Natural killer cell (primary cell): ENCODE measurements at regions of chr12 and their contacts with region 1.

Region 1: GRCh38 chr12:121060149-121061001 is 21.3 kb upstream of the OASL start:
- DNase-seq: peak; percentile 53 to 86
- ATAC-seq: peak; percentile 92 to 96 (median 93)
- H3K4me3 ChIP-seq: peak overlapping the region; percentile 58
- H3K4me3 Mint-ChIP-seq: peak overlapping the region; percentile 92
- H3K27ac ChIP-seq: peak overlapping the region; percentile 98
- H3K27ac Mint-ChIP-seq: peak overlapping the region; percentile 95 to 97
- H3K4me1 ChIP-seq: peaks cover 16% of the 10 kb centered on the region
- H3K4me1 Mint-ChIP-seq: peaks cover 10% of the 10 kb centered on the region in 2 donors
- H3K27me3 ChIP-seq: no peaks in the 10 kb centered on the region
- H3K27me3 Mint-ChIP-seq: no peaks in the 10 kb centered on the region
- CTCF ChIP-seq: peak; percentile 43

Region 2: GRCh38 chr12:120554678-120555077 is 505.7 kb before region 1 on chr12:
- intact Hi-C with region 1: no loop called
- DNase-seq: no peak
- ATAC-seq: no peak
- H3K4me3 ChIP-seq: no peak overlapping the region
- H3K4me3 Mint-ChIP-seq: no peak overlapping the region
- H3K27ac ChIP-seq: no peak overlapping the region
- H3K27ac Mint-ChIP-seq: no peak overlapping the region
- H3K4me1 ChIP-seq: peaks cover 3% of the 10 kb centered on the region
- H3K4me1 Mint-ChIP-seq: peaks cover 0 to 6% of the 10 kb centered on the region in 2 donors
- H3K27me3 ChIP-seq: no peaks in the 10 kb centered on the region
- H3K27me3 Mint-ChIP-seq: no peaks in the 10 kb centered on the region
- CTCF ChIP-seq: no peak

Region 3: DNA sequence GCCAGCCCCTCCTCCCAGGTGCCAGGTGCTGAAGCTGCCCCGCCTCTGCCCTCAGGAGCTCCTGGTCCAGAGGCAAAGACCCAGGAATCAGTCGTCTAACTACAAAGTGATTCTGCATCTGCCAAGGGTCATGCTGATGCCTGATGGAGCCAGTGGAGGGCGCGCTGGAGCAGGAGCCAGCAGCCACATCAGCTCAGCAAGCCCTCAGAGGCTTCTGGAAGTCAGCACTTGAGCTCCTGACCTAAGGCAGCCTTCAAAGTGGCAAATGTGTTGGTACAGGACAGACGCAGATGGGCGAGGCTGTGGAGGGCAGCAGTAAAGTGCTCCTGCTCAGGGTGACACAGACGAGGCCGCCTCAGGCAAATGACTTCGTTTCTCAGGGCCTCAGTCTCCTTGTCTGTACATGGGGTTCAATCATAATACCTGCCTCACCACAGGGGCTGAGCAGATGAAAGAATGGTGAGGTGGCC is 55.0 kb before region 1 on chr12:
- intact Hi-C with region 1: loop called (anchors 1 kb)
- DNase-seq: peak; percentile 45 to 65
- ATAC-seq: peak; percentile 65 to 87 (median 74)
- H3K4me3 ChIP-seq: no peak overlapping the region
- H3K4me3 Mint-ChIP-seq: no peak overlapping the region
- H3K27ac ChIP-seq: no peak overlapping the region
- H3K27ac Mint-ChIP-seq: peak overlapping the region in 1 of 2 donors; percentile 63
- H3K4me1 ChIP-seq: peaks cover 5% of the 10 kb centered on the region
- H3K4me1 Mint-ChIP-seq: peaks cover 0 to 11% of the 10 kb centered on the region in 2 donors
- H3K27me3 ChIP-seq: no peaks in the 10 kb centered on the region
- H3K27me3 Mint-ChIP-seq: no peaks in the 10 kb centered on the region
- CTCF ChIP-seq: peak; percentile 48

Region 4: DNA sequence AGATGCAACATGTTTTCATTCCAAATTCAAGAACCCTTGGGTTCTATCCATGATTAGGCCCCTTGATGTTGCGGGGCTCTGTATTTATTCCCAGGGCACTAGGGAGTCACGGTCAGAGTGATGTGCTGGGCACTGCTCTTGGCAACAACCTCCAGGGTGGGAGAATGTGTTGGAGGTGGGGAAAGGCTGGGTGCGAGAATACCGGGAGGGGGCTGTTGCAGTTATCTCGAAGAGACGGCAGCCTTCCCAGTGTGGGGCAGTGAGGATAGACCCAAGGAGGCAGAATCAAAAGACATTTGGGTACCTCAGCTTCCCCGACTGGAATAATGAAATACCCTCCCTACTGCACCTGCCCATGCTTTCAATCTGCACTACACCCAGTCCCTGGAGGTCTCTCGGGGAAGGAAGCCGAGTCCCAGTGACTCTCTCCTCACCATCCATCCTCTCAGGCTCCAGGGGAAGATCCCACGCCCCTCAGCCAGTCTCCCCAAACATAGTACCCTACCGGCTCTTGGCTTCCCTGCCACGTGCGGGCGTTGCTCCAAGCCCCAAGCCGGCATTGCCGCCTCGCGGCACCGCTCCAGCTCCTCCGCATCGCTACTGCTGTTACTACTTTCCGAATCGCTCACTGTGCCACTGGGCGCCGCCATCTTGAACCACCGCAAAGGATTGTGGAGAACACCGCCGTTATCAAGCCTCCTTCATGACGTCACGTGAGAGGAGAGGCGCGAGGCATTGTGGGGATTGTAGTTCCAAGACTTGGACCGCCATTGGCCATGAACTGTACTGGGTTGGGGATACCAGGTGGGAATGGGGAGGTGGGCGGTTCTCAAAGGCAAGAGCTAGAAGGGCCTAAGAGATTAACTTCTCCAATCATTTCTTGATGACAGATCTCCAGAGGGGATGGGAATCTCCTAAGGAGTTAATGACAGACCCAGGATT is 44.3 kb before region 1 on chr12 and contains the start of gene C12orf43:
- intact Hi-C with region 1: loop called (anchors 1 kb)
- DNase-seq: peak; percentile 87 to 96
- ATAC-seq: peak; percentile 97 to 99 (median 98)
- H3K4me3 ChIP-seq: peak within 1 kb of the TSS; percentile 56
- H3K4me3 Mint-ChIP-seq: peak within 1 kb of the TSS; percentile 100
- H3K27ac ChIP-seq: peak within 1 kb of the TSS; percentile 71
- H3K27ac Mint-ChIP-seq: peak within 1 kb of the TSS; percentile 94 to 99
- H3K4me1 ChIP-seq: peaks cover 9% of the 10 kb centered on the region
- H3K4me1 Mint-ChIP-seq: peaks cover 10 to 19% of the 10 kb centered on the region in 2 donors
- H3K27me3 ChIP-seq: no peaks in the 10 kb centered on the region
- H3K27me3 Mint-ChIP-seq: no peaks in the 10 kb centered on the region
- CTCF ChIP-seq: no peak
- total RNA-seq, gene C12orf43: 16.0 to 19.9 (median 18.0) TPM

Region 5: GRCh38 chr12:121033625-121034349 is 26.6 kb before region 1 on chr12:
- intact Hi-C with region 1: loop called (anchors 1 kb)
- DNase-seq: peak; percentile 56 to 87
- ATAC-seq: peak; percentile 74 to 89 (median 87)
- H3K4me3 ChIP-seq: no peak overlapping the region
- H3K4me3 Mint-ChIP-seq: peak overlapping the region; percentile 78
- H3K27ac ChIP-seq: peak overlapping the region; percentile 82
- H3K27ac Mint-ChIP-seq: peak overlapping the region; percentile 87 to 94
- H3K4me1 ChIP-seq: peaks cover 62% of the 10 kb centered on the region
- H3K4me1 Mint-ChIP-seq: peaks cover 50 to 51% of the 10 kb centered on the region in 2 donors
- H3K27me3 ChIP-seq: no peaks in the 10 kb centered on the region
- H3K27me3 Mint-ChIP-seq: no peaks in the 10 kb centered on the region
- CTCF ChIP-seq: no peak

Region 6: DNA sequence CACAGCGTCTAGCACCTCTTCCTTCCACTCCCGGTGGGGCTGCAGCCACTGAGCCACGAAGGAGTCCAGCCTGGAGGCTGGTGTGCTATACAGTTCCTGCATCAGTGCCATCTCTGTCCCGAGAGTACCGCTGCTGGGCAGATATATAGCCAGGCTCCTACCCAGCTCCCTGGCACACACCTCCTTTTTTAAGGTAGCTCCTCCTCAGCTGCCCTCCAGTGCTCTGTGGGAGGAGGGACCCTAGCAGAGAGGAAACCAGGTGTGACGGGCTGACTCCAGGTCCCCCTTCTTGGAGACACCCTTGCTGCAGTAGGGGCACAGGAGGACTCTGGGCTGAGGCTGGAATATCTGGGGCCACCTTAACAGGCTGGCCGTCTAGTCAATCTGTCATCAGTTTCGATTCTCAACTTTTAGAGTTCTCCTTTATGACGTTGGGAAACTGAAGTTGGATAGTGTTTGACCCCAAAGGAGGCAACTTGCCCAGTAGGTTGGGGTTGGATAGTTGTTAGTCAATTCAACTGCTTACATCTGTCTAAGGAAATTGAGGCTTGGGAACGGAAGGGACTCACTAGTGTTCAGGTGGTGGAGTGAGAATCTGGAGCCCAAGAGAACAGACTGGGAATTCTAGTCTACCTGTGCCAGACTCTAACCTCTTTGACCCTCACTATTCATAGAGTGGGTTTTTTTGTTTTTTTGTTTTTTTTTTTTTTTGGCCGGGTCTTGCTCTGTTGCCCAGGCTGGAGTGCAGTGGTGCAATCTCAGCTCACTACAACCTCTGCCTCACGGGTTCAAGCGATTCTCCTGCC is 21.3 kb before region 1 on chr12 and contains the start of gene OASL:
- intact Hi-C with region 1: loop called (anchors 1 kb)
- DNase-seq: peak; percentile 67 to 81
- ATAC-seq: peak; percentile 62 to 83 (median 71)
- H3K4me3 ChIP-seq: peak within 1 kb of the TSS; percentile 60
- H3K4me3 Mint-ChIP-seq: peak within 1 kb of the TSS; percentile 97
- H3K27ac ChIP-seq: peak within 1 kb of the TSS; percentile 78
- H3K27ac Mint-ChIP-seq: peak within 1 kb of the TSS; percentile 93 to 96
- H3K4me1 ChIP-seq: peaks cover 55% of the 10 kb centered on the region
- H3K4me1 Mint-ChIP-seq: peaks cover 43 to 47% of the 10 kb centered on the region in 2 donors
- H3K27me3 ChIP-seq: no peaks in the 10 kb centered on the region
- H3K27me3 Mint-ChIP-seq: peaks cover 9 to 18% of the 10 kb centered on the region in 2 donors
- CTCF ChIP-seq: no peak
- total RNA-seq, gene OASL: 7.5 to 48.0 (median 35.2) TPM

Region 7: DNA sequence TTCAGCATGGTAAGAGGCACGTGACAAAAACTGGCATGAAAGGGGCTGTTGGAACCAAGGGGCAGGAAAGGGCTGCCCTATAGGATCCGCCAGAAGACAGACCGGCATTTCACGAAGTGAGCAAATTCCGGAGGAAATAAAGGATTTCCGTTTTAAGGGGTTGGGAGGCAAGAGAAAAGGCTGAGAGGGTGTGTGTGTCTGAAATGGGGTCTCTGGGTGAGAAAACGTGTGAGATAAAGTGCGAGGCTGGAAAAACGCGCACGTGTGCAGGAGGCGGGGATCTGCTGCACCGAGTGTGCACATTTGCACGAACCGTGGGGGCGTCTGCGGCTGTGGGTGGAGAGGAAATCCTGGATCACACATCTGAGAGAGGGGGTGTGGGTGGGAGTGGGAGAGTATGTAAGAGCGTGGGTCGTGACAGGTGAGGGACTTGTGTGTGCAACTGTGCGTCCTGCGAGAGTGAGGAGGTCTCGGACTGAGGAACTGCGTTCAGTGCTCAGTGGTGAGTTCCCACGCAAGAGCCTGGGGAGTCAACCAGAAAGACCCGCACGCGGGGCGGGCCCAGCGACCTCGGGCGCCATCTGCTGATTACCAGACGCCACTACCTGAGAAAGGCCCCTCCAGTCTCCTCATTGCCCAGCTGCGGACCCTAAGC is 35.3 kb after region 1 on chr12:
- intact Hi-C with region 1: loop called (anchors 1 kb)
- DNase-seq: peak; percentile 70 to 87
- ATAC-seq: peak; percentile 80 to 86 (median 80)
- H3K4me3 ChIP-seq: peak overlapping the region; percentile 23
- H3K4me3 Mint-ChIP-seq: peak overlapping the region; percentile 93
- H3K27ac ChIP-seq: no peak overlapping the region
- H3K27ac Mint-ChIP-seq: peak overlapping the region; percentile 70 to 87
- H3K4me1 ChIP-seq: peaks cover 37% of the 10 kb centered on the region
- H3K4me1 Mint-ChIP-seq: peaks cover 49 to 50% of the 10 kb centered on the region in 2 donors
- H3K27me3 ChIP-seq: no peaks in the 10 kb centered on the region
- H3K27me3 Mint-ChIP-seq: peaks cover 0 to 13% of the 10 kb centered on the region in 2 donors
- CTCF ChIP-seq: peak; percentile 85

Region 8: DNA sequence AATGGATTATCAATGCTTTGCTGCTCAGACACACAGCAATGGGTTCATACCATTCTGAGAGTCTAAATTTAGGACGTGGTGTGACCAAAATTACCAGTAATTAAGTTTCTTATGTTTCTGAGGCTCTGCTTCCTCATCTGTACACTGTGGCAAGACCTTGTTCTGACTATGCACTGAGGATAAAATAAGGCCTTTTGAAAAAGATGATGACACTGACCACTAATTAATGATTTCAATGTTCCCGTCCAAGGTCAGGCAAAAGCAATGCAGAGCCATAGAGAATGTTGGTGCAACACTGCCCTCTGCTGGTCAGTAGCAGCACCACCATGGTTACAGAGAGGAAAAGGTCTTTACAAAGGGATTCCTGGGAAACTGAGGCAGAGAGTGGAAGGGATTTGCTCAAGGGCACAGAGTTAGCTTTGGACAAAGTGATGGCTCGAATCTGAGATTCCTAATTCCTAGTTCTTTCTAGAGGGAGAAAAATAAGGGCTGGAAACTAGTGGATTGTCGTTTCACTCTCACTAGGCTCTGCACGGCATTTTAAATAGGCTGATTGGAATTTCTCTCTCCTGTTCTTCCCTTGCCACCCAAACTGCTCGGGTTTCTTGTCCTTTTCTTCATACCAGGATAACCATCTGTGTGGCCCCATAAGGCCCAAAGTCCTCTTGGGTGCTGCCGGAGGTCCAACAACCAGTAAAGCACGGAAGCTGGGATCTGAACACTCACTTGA is 50.0 kb after region 1 on chr12:
- intact Hi-C with region 1: loop called (anchors 1 kb)
- DNase-seq: peak; percentile 63 to 90
- ATAC-seq: peak; percentile 79 to 92 (median 85)
- H3K4me3 ChIP-seq: no peak overlapping the region
- H3K4me3 Mint-ChIP-seq: no peak overlapping the region
- H3K27ac ChIP-seq: no peak overlapping the region
- H3K27ac Mint-ChIP-seq: peak overlapping the region in 1 of 2 donors; percentile 65
- H3K4me1 ChIP-seq: no peaks in the 10 kb centered on the region
- H3K4me1 Mint-ChIP-seq: peaks cover 6% of the 10 kb centered on the region in 2 donors
- H3K27me3 ChIP-seq: no peaks in the 10 kb centered on the region
- H3K27me3 Mint-ChIP-seq: peaks cover 0 to 3% of the 10 kb centered on the region in 2 donors
- CTCF ChIP-seq: peak; percentile 98

Region 9: GRCh38 chr12:121144416-121144914 is 84.1 kb after region 1 on chr12:
- intact Hi-C with region 1: no loop called
- DNase-seq: no peak
- ATAC-seq: peak in 2 of 3 donors; percentile 28 to 35
- H3K4me3 ChIP-seq: no peak overlapping the region
- H3K4me3 Mint-ChIP-seq: no peak overlapping the region
- H3K27ac ChIP-seq: peak overlapping the region; percentile 44
- H3K27ac Mint-ChIP-seq: peak overlapping the region; percentile 7 to 51
- H3K4me1 ChIP-seq: peaks cover 19% of the 10 kb centered on the region
- H3K4me1 Mint-ChIP-seq: peaks cover 19 to 31% of the 10 kb centered on the region in 2 donors
- H3K27me3 ChIP-seq: no peaks in the 10 kb centered on the region
- H3K27me3 Mint-ChIP-seq: no peaks in the 10 kb centered on the region
- CTCF ChIP-seq: no peak